Ascending aorta (tissue), 2 donors: ENCODE measurements at regions of chr4 and their contacts with region 1.

Region 1: GRCh38 chr4:52028969-52029368 is 8.8 kb upstream of the LRRC66 start:
- DNase-seq: no peak
- H3K4me3 ChIP-seq: no peak overlapping the region
- H3K27ac ChIP-seq: no peak overlapping the region
- H3K4me1 ChIP-seq: no peaks in the 10 kb centered on the region
- H3K27me3 ChIP-seq: no peaks in the 10 kb centered on the region
- CTCF ChIP-seq: no peak

Region 2: DNA sequence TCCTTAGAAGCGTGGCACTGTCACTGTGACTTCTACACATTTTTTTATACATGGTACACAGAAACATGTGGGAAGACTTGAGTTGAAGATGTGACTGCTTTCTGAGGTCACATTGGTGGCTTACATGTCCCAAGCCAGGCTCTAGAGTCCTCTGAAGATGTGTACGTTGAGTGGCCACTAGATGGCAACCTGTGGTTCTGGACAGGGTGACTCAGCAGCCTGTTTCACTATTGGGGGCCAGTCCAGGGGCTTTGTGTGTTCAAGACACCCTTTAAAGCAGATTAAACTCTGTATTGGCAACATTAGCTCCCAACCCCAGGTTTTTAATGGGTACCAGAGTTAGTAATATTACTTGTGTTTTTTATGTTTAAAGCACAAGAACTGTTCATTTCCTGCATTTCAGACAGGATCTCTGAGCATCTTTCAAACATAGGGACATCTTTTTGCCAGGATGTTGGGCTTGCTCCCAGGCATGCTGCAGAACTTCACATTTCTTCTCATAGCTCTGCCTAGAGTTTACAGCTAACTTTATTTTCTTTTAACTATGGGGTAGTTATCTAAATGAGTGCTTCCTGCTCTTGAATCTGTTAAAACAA is 133.1 kb before region 1 on chr4:
- intact Hi-C with region 1: loop called (anchors 2 kb)
- DNase-seq: peak in 1 of 2 donors; percentile 86
- H3K4me3 ChIP-seq: no peak overlapping the region
- H3K27ac ChIP-seq: no peak overlapping the region
- H3K4me1 ChIP-seq: peaks cover 0 to 9% of the 10 kb centered on the region in 2 donors
- H3K27me3 ChIP-seq: no peaks in the 10 kb centered on the region
- CTCF ChIP-seq: peak; percentile 39 to 76 (median 73)

Region 3: GRCh38 chr4:52051619-52052474 is 22.9 kb after region 1 on chr4:
- intact Hi-C with region 1: no loop called
- DNase-seq: peak in 1 of 2 donors; percentile 81
- H3K4me3 ChIP-seq: peak overlapping the region; percentile 65 to 82
- H3K27ac ChIP-seq: peak overlapping the region; percentile 73 to 77
- H3K4me1 ChIP-seq: no peaks in the 10 kb centered on the region
- H3K27me3 ChIP-seq: no peaks in the 10 kb centered on the region
- CTCF ChIP-seq: no peak